WTC11 (cell line): ENCODE measurements at regions of chr16 and their contacts with region 1.

Region 1: DNA sequence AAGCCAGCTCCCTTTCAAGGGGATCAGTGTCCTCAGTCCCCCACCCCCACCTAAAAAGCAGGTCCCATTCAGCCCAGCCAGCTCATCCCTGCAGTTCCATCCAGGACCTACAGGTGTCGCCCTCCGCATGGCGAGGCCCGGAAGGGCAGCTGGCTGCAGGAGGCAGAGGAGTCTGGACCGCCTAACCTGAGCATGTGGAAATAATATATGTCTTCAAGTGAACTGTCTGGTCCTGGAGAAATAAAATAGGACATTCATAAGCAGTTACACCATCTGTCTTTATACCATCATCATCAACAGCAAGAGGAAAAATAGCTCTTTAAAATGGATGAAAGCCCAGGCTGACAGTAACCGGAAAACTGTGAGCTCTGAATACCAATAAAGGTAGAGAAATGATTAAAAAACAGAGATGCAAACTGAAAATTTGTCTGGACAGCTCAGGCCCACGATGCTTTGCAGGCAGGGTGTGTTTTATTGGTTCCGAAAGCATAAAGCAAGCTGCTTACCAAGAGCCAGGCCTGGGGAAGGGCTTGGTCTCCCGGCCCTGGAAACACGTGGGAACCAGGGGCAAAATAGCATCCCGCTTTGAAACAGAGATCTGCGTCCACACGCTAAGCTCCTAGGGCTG is 215.2 kb downstream of the ZFHX3 start:
- DNase-seq: peak; percentile 93
- ATAC-seq: peak; percentile 87
- H3K4me3 Mint-ChIP-seq: no peak overlapping the region
- H3K27ac Mint-ChIP-seq: no peak overlapping the region
- H3K4me1 Mint-ChIP-seq: peaks cover 11% of the 10 kb centered on the region
- H3K27me3 Mint-ChIP-seq: no peaks in the 10 kb centered on the region
- CTCF ChIP-seq: peak; percentile 93

Region 2: DNA sequence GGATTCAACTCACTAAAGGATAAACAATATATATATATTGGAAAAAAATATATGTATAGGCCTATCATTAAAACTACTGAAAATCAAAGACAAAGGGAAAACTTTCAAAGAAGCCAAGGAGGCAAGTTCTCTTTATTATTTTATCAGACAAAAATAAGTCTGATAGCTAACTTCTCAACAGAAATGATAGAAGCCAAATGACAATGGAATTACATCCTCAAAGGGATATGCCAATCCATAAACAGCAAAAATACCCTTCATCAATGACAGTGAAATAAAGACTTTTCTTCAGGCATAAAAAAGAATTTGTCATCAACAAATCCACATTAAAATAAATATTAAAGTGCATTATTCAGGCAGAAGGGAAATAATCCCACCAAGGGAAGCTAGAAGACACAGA is 178.2 kb before region 1 on chr16:
- CTCF ChIA-PET with region 1: no interaction called
- POLR2A ChIA-PET with region 1: no interaction called
- DNase-seq: no peak
- ATAC-seq: no peak
- H3K4me3 Mint-ChIP-seq: no peak overlapping the region
- H3K27ac Mint-ChIP-seq: no peak overlapping the region
- H3K4me1 Mint-ChIP-seq: peaks cover 4% of the 10 kb centered on the region
- H3K27me3 Mint-ChIP-seq: no peaks in the 10 kb centered on the region; the same call in 1 of the 2 replicates
- CTCF ChIP-seq: no peak

Region 3: GRCh38 chr16:72664509-72665225 is 168.1 kb before region 1 on chr16:
- CTCF ChIA-PET with region 1: interaction called, 11 read pairs
- POLR2A ChIA-PET with region 1: no interaction called
- DNase-seq: peak; percentile 96
- ATAC-seq: peak; percentile 99
- H3K4me3 Mint-ChIP-seq: peak overlapping the region; percentile 97
- H3K27ac Mint-ChIP-seq: peak overlapping the region; percentile 100
- H3K4me1 Mint-ChIP-seq: peaks cover 4% of the 10 kb centered on the region
- H3K27me3 Mint-ChIP-seq: no peaks in the 10 kb centered on the region; the same call in 1 of the 2 replicates
- CTCF ChIP-seq: no peak

Region 4: GRCh38 chr16:72705801-72706200 is 126.9 kb before region 1 on chr16:
- CTCF ChIA-PET with region 1: no interaction called
- POLR2A ChIA-PET with region 1: no interaction called
- DNase-seq: no peak
- ATAC-seq: no peak
- H3K4me3 Mint-ChIP-seq: no peak overlapping the region
- H3K27ac Mint-ChIP-seq: no peak overlapping the region
- H3K4me1 Mint-ChIP-seq: no peaks in the 10 kb centered on the region
- H3K27me3 Mint-ChIP-seq: no peaks in the 10 kb centered on the region
- CTCF ChIP-seq: no peak

Region 5: GRCh38 chr16:72797621-72798020 is 35.1 kb before region 1 on chr16:
- CTCF ChIA-PET with region 1: interaction called, 21 read pairs
- POLR2A ChIA-PET with region 1: no interaction called
- DNase-seq: no peak
- ATAC-seq: no peak
- H3K4me3 Mint-ChIP-seq: no peak overlapping the region
- H3K27ac Mint-ChIP-seq: no peak overlapping the region
- H3K4me1 Mint-ChIP-seq: peaks cover 7% of the 10 kb centered on the region
- H3K27me3 Mint-ChIP-seq: no peaks in the 10 kb centered on the region
- CTCF ChIP-seq: no peak

Region 6: DNA sequence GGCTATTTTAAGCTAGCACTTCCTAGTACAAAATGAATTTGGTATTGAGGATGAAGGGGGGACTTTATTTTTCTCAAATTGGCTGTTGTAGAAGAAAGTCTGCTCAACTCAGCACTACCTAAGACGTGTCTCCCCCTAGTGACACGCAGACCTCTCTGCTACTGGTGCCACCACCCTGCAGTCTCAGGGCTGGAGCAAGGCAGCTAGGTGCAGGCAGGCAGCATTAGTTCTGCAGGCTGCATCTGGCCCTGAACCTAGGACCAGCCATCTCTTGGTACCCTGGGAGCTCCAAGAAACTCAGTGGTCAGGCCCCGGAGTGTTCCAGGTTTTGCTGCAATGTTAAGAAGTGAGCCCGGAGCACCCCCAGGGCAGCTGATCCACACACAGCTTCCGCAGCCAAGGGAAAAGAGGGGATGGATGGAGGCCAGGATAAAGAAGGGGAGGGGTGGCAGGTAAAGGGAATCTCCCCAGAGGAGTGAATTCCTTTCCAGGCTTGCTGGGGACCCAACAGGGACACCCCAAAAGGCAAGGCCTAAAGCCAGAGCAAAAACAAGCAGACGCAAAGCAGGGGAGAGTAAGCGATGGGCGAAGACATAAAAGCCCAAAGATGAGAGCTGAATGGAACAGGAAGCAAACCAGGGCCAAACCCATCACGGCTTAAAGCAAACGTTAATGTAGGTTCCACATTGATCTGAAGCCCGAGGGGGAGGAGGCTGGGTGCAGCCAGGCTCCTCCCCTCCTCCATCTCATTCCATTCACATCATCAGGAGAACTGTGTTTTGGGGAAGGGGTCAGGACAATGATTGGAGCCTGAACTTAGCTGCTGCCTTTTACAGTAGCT is 14.7 kb after region 1 on chr16:
- CTCF ChIA-PET with region 1: interaction called, 101 read pairs
- POLR2A ChIA-PET with region 1: no interaction called
- DNase-seq: peak; percentile 55
- ATAC-seq: peak; percentile 89
- H3K4me3 Mint-ChIP-seq: no peak overlapping the region
- H3K27ac Mint-ChIP-seq: no peak overlapping the region
- H3K4me1 Mint-ChIP-seq: peaks cover 37% of the 10 kb centered on the region
- H3K27me3 Mint-ChIP-seq: no peaks in the 10 kb centered on the region; the same call in 1 of the 2 replicates
- CTCF ChIP-seq: peak; percentile 42; the same call in 1 of the 2 replicates

Region 7: GRCh38 chr16:72995151-72995881 is 162.6 kb after region 1 on chr16:
- CTCF ChIA-PET with region 1: interaction called, 23 read pairs
- POLR2A ChIA-PET with region 1: no interaction called
- DNase-seq: peak; percentile 73
- ATAC-seq: peak; percentile 86
- H3K4me3 Mint-ChIP-seq: no peak overlapping the region
- H3K27ac Mint-ChIP-seq: no peak overlapping the region
- H3K4me1 Mint-ChIP-seq: peaks cover 32% of the 10 kb centered on the region
- H3K27me3 Mint-ChIP-seq: no peaks in the 10 kb centered on the region; the same call in 1 of the 2 replicates
- CTCF ChIP-seq: peak; percentile 87

Region 8: DNA sequence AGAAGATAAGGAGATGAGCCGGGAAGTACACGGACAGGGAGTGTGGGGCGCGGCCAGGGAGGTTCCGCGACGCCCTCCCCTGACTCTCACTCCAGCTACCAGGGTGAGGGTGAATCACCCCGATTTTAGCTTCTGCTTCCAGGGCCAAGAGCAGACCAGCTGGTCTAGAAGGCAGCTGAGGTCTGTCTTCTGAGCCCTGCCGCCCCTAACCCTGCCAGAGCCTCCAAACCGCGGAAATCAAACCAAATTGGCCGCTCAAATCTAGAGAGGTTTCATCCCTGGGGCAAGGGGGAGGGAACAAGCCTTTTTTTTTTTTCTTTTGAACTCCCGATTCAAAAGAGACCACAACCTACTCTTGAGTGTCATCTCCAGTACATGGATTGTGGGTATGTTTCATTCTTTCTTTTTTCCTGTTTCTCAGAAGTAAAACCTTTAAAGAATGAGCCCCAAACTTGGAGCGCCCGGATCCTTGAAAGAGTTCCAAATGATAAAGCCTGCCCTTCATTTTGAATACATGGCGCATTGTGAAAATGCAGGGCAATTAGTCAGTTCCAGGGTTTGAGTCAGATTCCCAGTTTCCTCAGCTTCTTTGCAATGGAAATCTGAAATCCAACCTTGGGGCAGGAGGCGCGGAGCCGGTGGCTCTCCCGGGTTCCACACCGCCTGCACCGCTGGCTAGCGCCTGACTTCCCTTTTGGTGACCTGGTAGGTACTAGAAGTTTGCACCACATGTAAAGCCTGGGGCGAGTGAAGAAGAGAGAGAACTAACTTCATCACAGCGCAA is 231.7 kb after region 1 on chr16:
- CTCF ChIA-PET with region 1: interaction called, 15 read pairs
- POLR2A ChIA-PET with region 1: no interaction called
- DNase-seq: peak; percentile 49
- ATAC-seq: peak; percentile 2; the same call in 1 of the 2 replicates
- H3K4me3 Mint-ChIP-seq: peak overlapping the region; percentile 70
- H3K27ac Mint-ChIP-seq: no peak overlapping the region
- H3K4me1 Mint-ChIP-seq: peaks cover 78% of the 10 kb centered on the region
- H3K27me3 Mint-ChIP-seq: peaks cover 100% of the 10 kb centered on the region
- CTCF ChIP-seq: no peak